ENCODE measurements at regions of chr14 and their contacts with region 1.

Region 1: GRCh38 chr14:51860164-51860824 is at the start of gene GNG2:
- DNase-seq: peak; percentile 62 to 87 (median 84)
- ATAC-seq: peak; percentile 98
- H3K4me3 ChIP-seq: peak within 1 kb of the TSS; percentile 65
- H3K4me3 Mint-ChIP-seq: peak within 1 kb of the TSS; percentile 89 to 99 (median 96)
- H3K27ac ChIP-seq: peak within 1 kb of the TSS; percentile 90
- H3K27ac Mint-ChIP-seq: peak within 1 kb of the TSS; percentile 88 to 99 (median 96)
- H3K4me1 ChIP-seq: peaks cover 28 to 45% of the 10 kb centered on the region in 2 donors
- H3K4me1 Mint-ChIP-seq: peaks cover 43 to 78% (median 65%) of the 10 kb centered on the region in 7 donors
- H3K27me3 ChIP-seq: no peaks in the 10 kb centered on the region
- H3K27me3 Mint-ChIP-seq: no peaks in the 10 kb centered on the region
- total RNA-seq, gene GNG2: 62.1 to 199 (median 106) TPM

Region 2: GRCh38 chr14:51239813-51240803 is 620.2 kb before region 1 on chr14 and contains the start of gene TMX1:
- CTCF ChIA-PET with region 1: no interaction called
- POLR2A ChIA-PET with region 1: no interaction called
- intact Hi-C with region 1: loop called in 1 of 2 experiments (anchors 10 kb)
- DNase-seq: peak; percentile 70 to 88 (median 82)
- ATAC-seq: peak; percentile 94
- H3K4me3 ChIP-seq: peak within 1 kb of the TSS; percentile 99
- H3K4me3 Mint-ChIP-seq: no peak within 1 kb of the TSS
- H3K27ac ChIP-seq: peak within 1 kb of the TSS; percentile 81
- H3K27ac Mint-ChIP-seq: no peak within 1 kb of the TSS
- H3K4me1 ChIP-seq: peaks cover 16 to 17% of the 10 kb centered on the region in 2 donors
- H3K4me1 Mint-ChIP-seq: peaks cover 0 to 29% (median 20%) of the 10 kb centered on the region in 7 donors
- H3K27me3 ChIP-seq: no peaks in the 10 kb centered on the region
- H3K27me3 Mint-ChIP-seq: no peaks in the 10 kb centered on the region
- total RNA-seq, gene TMX1: 13.3 to 48.3 (median 23.1) TPM

Region 3: DNA sequence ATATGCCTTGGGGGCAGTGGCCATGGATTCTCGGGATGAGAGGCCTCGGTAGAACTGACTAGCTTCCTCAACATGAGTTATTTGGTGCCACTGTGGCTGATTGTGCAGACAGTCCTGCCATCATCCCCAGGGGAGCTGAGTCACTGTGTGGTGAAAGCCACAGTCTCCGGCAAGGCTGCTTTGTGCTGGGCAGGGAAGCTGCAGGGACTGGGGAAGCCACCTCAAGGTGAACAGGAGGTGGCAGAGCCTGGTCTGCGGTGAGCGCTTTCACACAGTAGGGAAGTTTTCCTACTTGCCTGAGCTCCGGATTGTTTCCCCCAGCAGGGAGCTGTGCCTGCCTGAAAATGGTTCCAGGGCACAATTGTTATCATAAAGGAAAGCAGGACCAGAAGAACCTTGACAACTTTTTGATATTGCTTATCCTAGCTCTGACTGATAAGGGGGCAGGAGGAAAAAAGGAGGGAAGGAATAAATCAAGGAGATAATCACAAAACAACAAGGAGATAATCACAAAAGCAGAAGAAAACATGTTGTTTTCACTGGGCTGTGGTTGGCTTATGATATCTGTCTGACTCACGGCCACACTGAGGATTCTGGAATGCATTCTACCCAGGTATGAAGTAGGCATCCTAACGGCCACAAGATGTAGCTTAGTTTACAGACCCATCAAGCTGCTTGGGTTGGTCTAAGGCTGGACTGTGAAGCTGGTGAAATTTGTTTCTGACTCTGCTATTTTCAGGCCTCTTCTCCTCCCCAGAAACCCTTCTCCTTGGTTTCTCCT is 32.1 kb before region 1 on chr14:
- CTCF ChIA-PET with region 1: no interaction called
- POLR2A ChIA-PET with region 1: interaction called, 3 read pairs
- intact Hi-C with region 1: loop called in 1 of 2 experiments (anchors 1 kb)
- DNase-seq: peak in 5 of 9 donors; percentile 16 to 68 (median 28)
- ATAC-seq: peak; percentile 97
- H3K4me3 ChIP-seq: no peak overlapping the region
- H3K4me3 Mint-ChIP-seq: no peak overlapping the region
- H3K27ac ChIP-seq: no peak overlapping the region
- H3K27ac Mint-ChIP-seq: peak overlapping the region in 1 of 9 donors; percentile 2
- H3K4me1 ChIP-seq: peaks cover 4 to 6% of the 10 kb centered on the region in 2 donors
- H3K4me1 Mint-ChIP-seq: peaks cover 0 to 4% (median 0%) of the 10 kb centered on the region in 7 donors
- H3K27me3 ChIP-seq: no peaks in the 10 kb centered on the region
- H3K27me3 Mint-ChIP-seq: no peaks in the 10 kb centered on the region

Region 4: DNA sequence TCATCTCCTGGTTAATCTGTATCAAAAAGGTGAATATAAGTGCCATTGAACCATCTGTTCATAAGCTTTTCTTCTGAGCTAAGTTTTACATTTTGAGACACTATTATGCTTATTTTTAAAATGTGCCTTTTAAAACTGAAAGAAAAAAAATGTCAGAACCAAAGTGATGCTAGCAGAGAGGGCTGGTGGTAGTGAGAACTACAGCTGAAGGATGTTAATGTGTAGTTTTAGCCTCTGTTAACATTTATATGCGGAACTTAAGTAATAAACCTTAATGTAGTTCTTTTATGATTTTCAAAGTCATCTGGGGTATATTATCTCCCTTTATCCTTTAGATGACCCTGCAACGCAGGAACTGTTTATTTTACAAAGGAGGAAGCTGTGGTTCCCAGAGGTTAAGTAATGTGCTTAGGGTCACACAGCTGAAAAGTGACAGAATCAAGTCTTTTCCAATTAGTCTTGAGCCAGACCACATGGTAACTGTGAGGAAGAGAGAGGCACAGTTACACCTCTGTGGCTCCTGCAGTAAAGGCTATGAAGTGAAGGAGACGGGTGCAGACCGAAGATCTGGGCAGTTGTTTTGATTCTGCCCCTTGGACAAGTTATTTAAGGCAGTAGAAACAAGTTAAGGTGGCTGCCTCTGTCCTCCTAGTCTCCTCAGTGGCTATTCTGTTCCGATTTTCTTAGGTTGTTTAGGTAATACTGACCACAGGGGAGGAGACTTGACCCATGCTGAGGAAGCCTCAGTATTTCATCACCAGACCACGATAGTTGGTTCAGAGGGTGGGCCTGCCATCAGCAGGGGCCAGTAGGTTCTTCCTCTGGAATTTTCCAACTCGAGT is 24.0 kb after region 1 on chr14:
- CTCF ChIA-PET with region 1: interaction called, 4 read pairs
- POLR2A ChIA-PET with region 1: interaction called, 22 read pairs
- intact Hi-C with region 1: loop called in 1 of 2 experiments (anchors 1 kb)
- DNase-seq: no peak
- ATAC-seq: peak; percentile 79
- H3K4me3 ChIP-seq: no peak overlapping the region
- H3K4me3 Mint-ChIP-seq: peak overlapping the region in 9 of 10 donors; percentile 9 to 66 (median 43)
- H3K27ac ChIP-seq: peak overlapping the region; percentile 19
- H3K27ac Mint-ChIP-seq: peak overlapping the region; percentile 18 to 91 (median 82)
- H3K4me1 ChIP-seq: peaks cover 45 to 49% of the 10 kb centered on the region in 2 donors
- H3K4me1 Mint-ChIP-seq: peaks cover 50 to 95% (median 89%) of the 10 kb centered on the region in 7 donors
- H3K27me3 ChIP-seq: no peaks in the 10 kb centered on the region
- H3K27me3 Mint-ChIP-seq: no peaks in the 10 kb centered on the region

Region 5: GRCh38 chr14:51922624-51923023 is 62.3 kb after region 1 on chr14:
- CTCF ChIA-PET with region 1: interaction called, 3 read pairs
- POLR2A ChIA-PET with region 1: interaction called, 4 read pairs
- intact Hi-C with region 1: loop called in 1 of 2 experiments (anchors 2 kb)
- DNase-seq: no peak
- ATAC-seq: peak; percentile 29
- H3K4me3 ChIP-seq: no peak overlapping the region
- H3K4me3 Mint-ChIP-seq: peak overlapping the region in 6 of 10 donors; percentile 1 to 39 (median 36)
- H3K27ac ChIP-seq: no peak overlapping the region
- H3K27ac Mint-ChIP-seq: peak overlapping the region in 8 of 9 donors; percentile 5 to 81 (median 65)
- H3K4me1 ChIP-seq: peaks cover 5 to 17% of the 10 kb centered on the region in 2 donors
- H3K4me1 Mint-ChIP-seq: peaks cover 22 to 80% (median 71%) of the 10 kb centered on the region in 7 donors
- H3K27me3 ChIP-seq: no peaks in the 10 kb centered on the region
- H3K27me3 Mint-ChIP-seq: no peaks in the 10 kb centered on the region

Region 6: DNA sequence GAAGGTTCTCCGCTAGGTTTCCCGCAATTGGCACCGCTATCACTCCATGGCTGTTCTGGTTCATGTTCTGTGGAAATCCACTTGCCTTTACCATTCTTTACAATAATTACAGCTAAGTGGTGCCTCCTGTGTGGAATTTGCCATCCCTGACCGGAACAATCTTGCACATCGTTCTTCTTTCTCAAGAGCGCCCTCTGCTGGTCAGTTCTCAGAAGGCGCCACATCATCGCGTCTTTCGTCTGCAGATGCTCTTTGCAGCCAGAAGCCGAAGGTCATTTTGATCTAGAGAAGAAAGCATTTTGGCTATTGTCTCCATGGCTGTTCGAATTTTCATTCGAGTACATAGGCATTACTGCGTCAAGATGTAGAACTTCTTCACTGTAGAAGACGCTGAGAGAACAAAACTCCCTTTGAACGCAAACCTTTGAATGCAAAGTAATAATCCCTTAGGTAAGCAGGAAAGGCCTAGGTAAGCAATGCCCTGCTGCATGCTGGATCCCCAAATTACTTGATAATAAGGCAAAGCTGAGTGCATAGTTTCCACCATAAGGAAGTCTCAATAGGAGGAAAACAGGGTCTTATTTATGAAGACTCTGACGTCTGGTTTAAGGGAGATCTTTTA is 118.9 kb after region 1 on chr14:
- CTCF ChIA-PET with region 1: interaction called, 10 read pairs
- POLR2A ChIA-PET with region 1: interaction called, 3 read pairs
- intact Hi-C with region 1: loop called (anchors 1 to 5 kb)
- DNase-seq: peak; percentile 53 to 80 (median 70)
- ATAC-seq: peak; percentile 91
- H3K4me3 ChIP-seq: no peak overlapping the region
- H3K4me3 Mint-ChIP-seq: no peak overlapping the region
- H3K27ac ChIP-seq: no peak overlapping the region
- H3K27ac Mint-ChIP-seq: peak overlapping the region in 3 of 9 donors; percentile 15 to 67 (median 20)
- H3K4me1 ChIP-seq: peaks cover 0 to 10% of the 10 kb centered on the region in 2 donors
- H3K4me1 Mint-ChIP-seq: peaks cover 0 to 18% (median 6%) of the 10 kb centered on the region in 7 donors
- H3K27me3 ChIP-seq: no peaks in the 10 kb centered on the region
- H3K27me3 Mint-ChIP-seq: peaks cover 0 to 5% (median 0%) of the 10 kb centered on the region in 5 donors

Measured in naive thymus-derived CD4-positive, alpha-beta T cell (primary cell).